Heart right ventricle (tissue), 16 donors: ENCODE measurements at regions of chr10 and their contacts with region 1.

Region 1: GRCh38 chr10:35364808-35365207 is 28.5 kb downstream of the CCNY start:
- DNase-seq: no peak
- ATAC-seq: no peak
- H3K4me3 ChIP-seq: no peak overlapping the region
- H3K27ac ChIP-seq: no peak overlapping the region
- H3K4me1 ChIP-seq: peaks cover 3 to 63% (median 50%) of the 10 kb centered on the region in 9 donors
- H3K27me3 ChIP-seq: no peaks in the 10 kb centered on the region
- CTCF ChIP-seq: no peak

Region 2: GRCh38 chr10:35351021-35351420 is 13.8 kb before region 1 on chr10:
- intact Hi-C with region 1: loop called in 1 of 10 experiments (anchors 2 kb)
- DNase-seq: no peak
- ATAC-seq: no peak
- H3K4me3 ChIP-seq: no peak overlapping the region
- H3K27ac ChIP-seq: no peak overlapping the region
- H3K4me1 ChIP-seq: peaks cover 14 to 100% (median 97%) of the 10 kb centered on the region in 9 donors
- H3K27me3 ChIP-seq: no peaks in the 10 kb centered on the region
- CTCF ChIP-seq: no peak